ENCODE measurements at regions of chr22 and their contacts with region 1.

Region 1: DNA sequence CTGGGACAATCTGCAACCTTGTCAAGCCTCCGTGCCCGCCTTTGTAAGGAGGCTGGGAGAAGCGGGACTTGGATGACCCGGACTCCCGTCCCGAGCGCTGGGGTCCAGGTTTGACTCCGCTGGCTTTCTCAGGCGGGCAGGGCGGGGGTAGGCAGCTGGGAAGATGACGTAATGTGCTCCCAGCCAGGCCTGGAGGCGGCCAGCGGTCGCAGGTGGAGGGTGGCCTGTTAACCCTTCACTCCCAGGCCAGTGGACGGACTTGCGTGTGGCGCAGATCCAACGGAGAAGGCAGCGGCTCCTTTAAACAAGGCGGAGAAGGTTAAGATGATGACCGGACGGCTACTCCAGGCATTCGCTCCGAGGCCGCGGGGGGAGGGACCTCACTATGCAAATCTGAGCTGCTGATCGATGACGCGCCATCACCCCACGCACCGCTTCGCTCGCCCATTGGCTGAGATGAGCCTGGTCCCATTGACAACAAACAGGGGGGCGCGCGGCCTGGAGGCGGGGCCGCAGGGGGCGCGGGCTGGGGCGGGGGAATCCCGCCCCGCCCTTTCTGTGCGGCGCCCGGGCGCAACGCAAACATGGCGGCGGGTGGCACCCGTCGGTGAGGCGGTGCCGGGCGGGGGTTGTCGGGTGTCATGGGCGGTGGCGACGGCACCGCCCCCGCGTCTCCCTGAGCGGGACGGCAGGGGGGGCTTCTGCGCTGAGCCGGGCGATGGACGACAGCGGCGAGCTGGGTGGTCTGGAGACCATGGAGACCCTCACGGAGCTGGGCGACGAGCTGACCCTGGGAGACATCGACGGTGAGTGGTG is at the start of gene SREBF2:
- DNase-seq: peak; percentile 100
- H3K4me3 Mint-ChIP-seq: peak within 1 kb of the TSS; percentile 98
- H3K27ac Mint-ChIP-seq: peak within 1 kb of the TSS; percentile 99
- H3K4me1 Mint-ChIP-seq: peaks cover 44% of the 10 kb centered on the region
- H3K27me3 Mint-ChIP-seq: no peaks in the 10 kb centered on the region
- total RNA-seq, gene SREBF2: 131 to 137 TPM

Region 2: GRCh38 chr22:41752011-41752970 is 80.5 kb before region 1 on chr22:
- CTCF ChIA-PET with region 1: no interaction called
- POLR2A ChIA-PET with region 1: no interaction called
- intact Hi-C with region 1: no loop called
- DNase-seq: peak; percentile 18
- H3K4me3 Mint-ChIP-seq: no peak overlapping the region
- H3K27ac Mint-ChIP-seq: peak overlapping the region; percentile 82
- H3K4me1 Mint-ChIP-seq: peaks cover 7% of the 10 kb centered on the region
- H3K27me3 Mint-ChIP-seq: peaks cover 4% of the 10 kb centered on the region

Region 3: GRCh38 chr22:41800348-41801146 is 32.2 kb before region 1 on chr22 and contains the start of gene CCDC134:
- CTCF ChIA-PET with region 1: interaction called, 6 read pairs
- POLR2A ChIA-PET with region 1: interaction called, 25 read pairs
- intact Hi-C with region 1: no loop called
- DNase-seq: peak; percentile 95
- H3K4me3 Mint-ChIP-seq: peak within 1 kb of the TSS; percentile 98
- H3K27ac Mint-ChIP-seq: peak within 1 kb of the TSS; percentile 95
- H3K4me1 Mint-ChIP-seq: peaks cover 35% of the 10 kb centered on the region
- H3K27me3 Mint-ChIP-seq: no peaks in the 10 kb centered on the region
- total RNA-seq, gene CCDC134: 16.1 to 17.6 TPM

Region 4: GRCh38 chr22:41822317-41823060 is 10.3 kb before region 1 on chr22:
- CTCF ChIA-PET with region 1: interaction called, 12 read pairs
- POLR2A ChIA-PET with region 1: interaction called, 4 read pairs
- intact Hi-C with region 1: no loop called
- DNase-seq: peak; percentile 46
- H3K4me3 Mint-ChIP-seq: no peak overlapping the region
- H3K27ac Mint-ChIP-seq: peak overlapping the region; percentile 82
- H3K4me1 Mint-ChIP-seq: peaks cover 39% of the 10 kb centered on the region
- H3K27me3 Mint-ChIP-seq: no peaks in the 10 kb centered on the region

Region 5: GRCh38 chr22:41873391-41873790 is 40.6 kb after region 1 on chr22:
- CTCF ChIA-PET with region 1: interaction called, 4 read pairs
- POLR2A ChIA-PET with region 1: interaction called, 15 read pairs
- intact Hi-C with region 1: loop called (anchors 1 kb)
- DNase-seq: peak; percentile 58
- H3K4me3 Mint-ChIP-seq: peak overlapping the region; percentile 58
- H3K27ac Mint-ChIP-seq: peak overlapping the region; percentile 92
- H3K4me1 Mint-ChIP-seq: peaks cover 61% of the 10 kb centered on the region
- H3K27me3 Mint-ChIP-seq: no peaks in the 10 kb centered on the region

Region 6: DNA sequence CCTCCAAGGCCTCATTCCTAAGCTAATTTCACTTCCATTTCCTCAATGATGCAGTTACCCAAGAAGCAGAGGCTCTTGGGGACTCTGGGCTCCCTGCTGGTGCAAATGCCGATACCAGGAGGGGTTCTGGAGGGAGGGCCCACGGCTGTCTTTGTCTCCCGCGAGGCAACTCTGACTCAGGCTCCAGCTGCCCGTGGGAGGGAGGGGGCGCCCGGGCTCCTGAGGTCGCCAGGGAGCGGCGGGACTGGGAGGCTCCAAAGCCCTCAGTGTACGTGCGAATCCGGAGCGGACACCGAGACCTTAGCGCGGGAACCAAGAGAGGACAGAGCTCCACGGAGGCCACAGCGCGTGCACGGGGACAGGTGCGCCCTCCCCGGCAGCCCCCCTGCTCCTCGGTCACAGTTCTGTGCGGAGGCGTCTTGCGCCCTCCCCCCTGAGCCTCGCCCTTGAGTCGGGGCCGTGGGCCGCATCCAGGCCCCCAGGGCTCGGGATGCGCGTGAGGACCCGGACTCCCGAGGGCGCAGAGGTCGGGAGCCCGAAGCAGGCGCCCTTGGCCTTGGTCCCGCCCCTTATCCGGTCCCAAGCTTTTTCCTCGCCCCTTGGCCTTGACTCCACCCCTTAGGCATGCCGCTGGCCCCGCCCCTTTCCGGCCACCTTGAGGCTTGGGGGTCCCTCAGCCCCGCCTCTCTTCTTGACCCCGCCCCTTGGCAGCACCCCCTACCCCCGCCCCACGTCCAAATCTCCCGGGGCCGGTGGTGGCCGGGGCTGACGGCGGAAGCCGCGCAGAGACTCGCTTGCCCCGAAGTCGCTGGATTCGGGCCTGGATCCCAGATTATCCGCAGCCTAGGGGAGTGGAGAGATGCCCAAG is 86.8 kb after region 1 on chr22:
- CTCF ChIA-PET with region 1: interaction called, 3 read pairs
- POLR2A ChIA-PET with region 1: no interaction called
- intact Hi-C with region 1: loop called (anchors 5 kb)
- DNase-seq: peak; percentile 68
- H3K4me3 Mint-ChIP-seq: peak overlapping the region; percentile 32
- H3K27ac Mint-ChIP-seq: no peak overlapping the region
- H3K4me1 Mint-ChIP-seq: peaks cover 20% of the 10 kb centered on the region
- H3K27me3 Mint-ChIP-seq: peaks cover 16% of the 10 kb centered on the region

Region 7: GRCh38 chr22:42169055-42169469 is 336.3 kb after region 1 on chr22:
- CTCF ChIA-PET with region 1: no interaction called
- POLR2A ChIA-PET with region 1: no interaction called
- intact Hi-C with region 1: no loop called
- DNase-seq: peak; percentile 83
- H3K4me3 Mint-ChIP-seq: no peak overlapping the region
- H3K27ac Mint-ChIP-seq: no peak overlapping the region
- H3K4me1 Mint-ChIP-seq: peaks cover 27% of the 10 kb centered on the region
- H3K27me3 Mint-ChIP-seq: no peaks in the 10 kb centered on the region